Calu3 (cell line): ENCODE measurements at regions of chr3 and their contacts with region 1.

Region 1: DNA sequence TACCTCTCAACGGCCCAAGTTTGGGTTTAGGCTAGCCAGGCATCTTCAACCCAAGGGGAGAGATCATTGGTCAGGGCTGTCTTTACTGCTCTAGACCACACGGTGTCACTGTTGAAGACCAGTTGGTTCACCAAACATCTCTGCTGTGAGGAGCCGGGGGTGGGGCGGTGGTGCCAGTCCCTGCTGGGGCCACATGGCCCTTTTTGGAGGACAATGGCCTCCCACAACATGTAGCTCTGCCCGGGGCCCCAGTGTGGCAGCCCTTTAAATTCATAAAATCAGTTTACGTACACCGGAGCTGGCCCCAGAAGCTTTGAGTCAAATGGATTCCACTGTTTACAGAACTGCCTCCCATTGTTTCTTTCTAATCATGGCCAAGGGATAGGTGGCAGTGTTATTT is 19.1 kb upstream of the TM4SF18 start:
- DNase-seq: peak; percentile 95
- H3K4me3 Mint-ChIP-seq: no peak overlapping the region
- H3K27ac Mint-ChIP-seq: peak overlapping the region; percentile 77
- H3K4me1 Mint-ChIP-seq: peaks cover 81% of the 10 kb centered on the region
- H3K27me3 Mint-ChIP-seq: no peaks in the 10 kb centered on the region
- CTCF ChIP-seq: peak; percentile 90

Region 2: DNA sequence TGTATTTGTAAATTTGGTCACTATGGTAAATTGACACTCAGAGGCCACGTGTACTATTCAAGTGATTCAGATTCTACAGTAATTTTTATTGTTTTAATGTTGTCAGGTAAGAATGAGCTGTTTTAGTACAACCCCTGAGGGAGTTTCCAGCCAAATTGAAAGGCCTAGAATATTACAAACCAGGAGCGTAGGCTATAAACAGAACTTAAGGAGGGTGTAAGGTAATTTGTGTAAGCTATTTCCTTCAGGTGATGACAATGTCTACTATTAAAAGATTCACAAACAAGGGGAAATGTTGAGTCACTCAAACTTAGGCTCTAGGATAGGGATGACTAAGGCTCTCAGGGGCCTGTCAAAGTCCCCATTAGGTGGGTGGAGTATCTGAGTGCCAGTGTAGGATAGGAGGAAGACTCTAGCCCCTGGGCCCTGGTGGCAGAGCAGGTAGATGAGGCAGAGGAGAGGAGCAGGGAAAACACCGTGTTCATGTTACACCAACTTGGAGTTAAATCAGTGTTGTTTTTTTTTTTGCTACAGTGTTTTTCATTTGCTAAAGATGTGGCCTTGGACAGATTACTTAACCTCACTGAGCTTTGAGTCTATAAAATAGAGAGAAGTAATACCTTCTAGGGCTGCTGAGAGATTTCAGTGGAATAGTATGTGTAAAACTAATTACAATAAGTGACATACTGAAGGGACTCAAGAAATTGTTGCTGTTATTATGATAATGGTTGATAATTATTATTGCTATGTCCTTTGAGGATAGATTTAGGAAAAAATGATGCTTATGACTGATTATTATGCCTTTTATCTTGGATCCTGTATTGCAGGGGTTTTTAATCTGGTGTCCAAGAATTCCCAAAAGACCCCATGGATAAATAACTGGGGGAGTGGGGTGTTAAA is 14.6 kb after region 1 on chr3:
- CTCF ChIA-PET with region 1: interaction called, 20 read pairs
- intact Hi-C with region 1: loop called (anchors 1 kb)
- DNase-seq: peak; percentile 92
- H3K4me3 Mint-ChIP-seq: peak overlapping the region; percentile 54
- H3K27ac Mint-ChIP-seq: peak overlapping the region; percentile 99
- H3K4me1 Mint-ChIP-seq: peaks cover 67% of the 10 kb centered on the region
- H3K27me3 Mint-ChIP-seq: peaks cover 8% of the 10 kb centered on the region
- CTCF ChIP-seq: no peak

Region 3: GRCh38 chr3:149393345-149394160 is 41.0 kb after region 1 on chr3:
- CTCF ChIA-PET with region 1: interaction called, 3 read pairs
- intact Hi-C with region 1: loop called (anchors 1 kb)
- DNase-seq: peak; percentile 93
- H3K4me3 Mint-ChIP-seq: no peak overlapping the region
- H3K27ac Mint-ChIP-seq: peak overlapping the region; percentile 40
- H3K4me1 Mint-ChIP-seq: peaks cover 84% of the 10 kb centered on the region
- H3K27me3 Mint-ChIP-seq: no peaks in the 10 kb centered on the region
- CTCF ChIP-seq: peak; percentile 99

Region 4: DNA sequence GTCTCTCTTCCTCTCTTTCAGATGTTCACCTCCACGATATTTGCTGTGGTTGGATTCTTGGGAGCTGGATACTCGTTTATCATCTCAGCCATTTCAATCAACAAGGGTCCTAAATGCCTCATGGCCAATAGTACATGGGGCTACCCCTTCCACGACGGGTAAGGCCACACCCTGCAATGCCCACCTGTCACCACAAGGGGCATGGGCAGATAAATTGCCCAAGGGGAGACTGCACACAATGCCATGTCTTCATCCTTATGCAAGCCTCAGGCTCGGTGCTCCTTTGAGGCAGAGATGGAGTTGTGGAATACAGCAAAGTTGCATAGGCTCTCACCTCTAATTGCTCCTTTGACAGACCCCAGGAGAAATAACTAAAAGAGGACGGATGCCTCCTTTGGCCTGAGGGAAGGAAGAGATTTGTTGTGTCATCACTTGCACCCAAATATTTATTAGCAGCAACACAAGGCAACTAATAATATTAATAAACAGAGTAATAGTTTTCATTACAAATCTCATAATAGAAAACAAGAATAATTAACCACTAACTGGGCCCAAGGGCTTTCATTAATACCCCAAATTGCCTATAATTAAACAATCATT is 135.1 kb after region 1 on chr3:
- CTCF ChIA-PET with region 1: interaction called, 3 read pairs
- intact Hi-C with region 1: loop called (anchors 2 kb)
- DNase-seq: peak; percentile 79
- H3K4me3 Mint-ChIP-seq: no peak overlapping the region
- H3K27ac Mint-ChIP-seq: no peak overlapping the region
- H3K4me1 Mint-ChIP-seq: peaks cover 23% of the 10 kb centered on the region
- H3K27me3 Mint-ChIP-seq: no peaks in the 10 kb centered on the region
- CTCF ChIP-seq: peak; percentile 91